Caco-2 (cell line): ENCODE measurements at regions of chr10 and their contacts with region 1.

Region 1: DNA sequence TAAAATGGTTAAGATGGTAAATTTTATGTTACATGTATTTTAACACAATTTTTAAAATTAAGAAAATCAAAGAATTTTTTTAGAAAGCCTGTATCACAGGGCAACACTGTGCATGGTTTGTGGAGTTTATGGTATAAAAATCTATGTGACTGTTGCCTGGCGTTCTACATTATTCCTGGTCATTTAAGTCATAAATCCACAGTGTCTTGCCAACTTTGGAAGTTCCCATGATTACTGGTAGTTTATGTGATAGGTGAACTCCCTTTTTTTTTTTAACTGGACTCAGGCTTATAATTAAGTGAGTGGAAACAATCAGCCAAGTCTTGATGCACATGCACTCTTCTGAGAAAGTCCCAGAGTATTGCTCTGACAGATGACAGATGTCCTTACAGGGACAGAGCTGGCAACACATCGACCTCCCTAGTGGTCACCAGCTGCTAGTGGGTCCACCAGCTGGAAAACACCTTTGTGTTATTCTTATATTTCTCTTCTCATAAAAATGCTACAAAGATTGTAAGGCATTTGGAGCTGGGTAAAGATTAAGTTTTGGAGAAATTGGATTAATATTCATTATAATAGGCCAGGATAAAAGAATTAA is 8.8 kb upstream of the STN1 start:
- DNase-seq: no peak
- H3K4me3 ChIP-seq: no peak overlapping the region
- H3K4me3 Mint-ChIP-seq: peak overlapping the region; percentile 37
- H3K27ac Mint-ChIP-seq: peak overlapping the region; percentile 59
- H3K4me1 ChIP-seq: peaks cover 78% of the 10 kb centered on the region
- H3K4me1 Mint-ChIP-seq: peaks cover 44% of the 10 kb centered on the region
- H3K27me3 ChIP-seq: no peaks in the 10 kb centered on the region
- H3K27me3 Mint-ChIP-seq: no peaks in the 10 kb centered on the region
- CTCF ChIP-seq: peak in 1 of 2 experiments; percentile 25

Region 2: GRCh38 chr10:103712570-103713498 is 214.0 kb before region 1 on chr10:
- CTCF ChIA-PET with region 1: no interaction called
- POLR2A ChIA-PET with region 1: no interaction called
- intact Hi-C with region 1: no loop called
- DNase-seq: peak; percentile 79 to 88
- H3K4me3 ChIP-seq: no peak overlapping the region
- H3K4me3 Mint-ChIP-seq: no peak overlapping the region
- H3K27ac Mint-ChIP-seq: no peak overlapping the region
- H3K4me1 ChIP-seq: peaks cover 21% of the 10 kb centered on the region
- H3K4me1 Mint-ChIP-seq: peaks cover 22% of the 10 kb centered on the region
- H3K27me3 ChIP-seq: no peaks in the 10 kb centered on the region
- H3K27me3 Mint-ChIP-seq: no peaks in the 10 kb centered on the region
- CTCF ChIP-seq: peak; percentile 82 to 93

Region 3: DNA sequence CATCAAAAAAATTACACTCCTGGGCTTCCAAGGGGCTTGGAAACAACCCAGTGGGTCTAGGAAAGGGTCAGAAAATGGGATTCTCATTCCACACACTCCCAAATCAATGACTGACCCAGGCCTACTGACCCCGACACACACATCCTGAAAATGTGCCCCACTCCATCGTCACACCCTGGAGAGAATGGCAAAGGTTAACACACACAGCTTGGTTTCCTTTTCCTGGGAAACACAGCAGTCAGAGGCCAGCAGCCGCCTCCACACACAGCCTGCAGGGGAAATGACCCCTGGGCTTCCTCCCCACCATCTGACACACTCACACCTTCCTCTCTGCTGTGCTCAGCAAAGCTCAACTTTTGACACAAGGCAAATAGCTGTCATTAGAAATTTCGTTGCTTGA is 114.4 kb before region 1 on chr10:
- CTCF ChIA-PET with region 1: no interaction called
- POLR2A ChIA-PET with region 1: no interaction called
- intact Hi-C with region 1: no loop called
- DNase-seq: no peak
- H3K4me3 ChIP-seq: no peak overlapping the region
- H3K4me3 Mint-ChIP-seq: no peak overlapping the region
- H3K27ac Mint-ChIP-seq: no peak overlapping the region
- H3K4me1 ChIP-seq: peaks cover 21% of the 10 kb centered on the region
- H3K4me1 Mint-ChIP-seq: peaks cover 28% of the 10 kb centered on the region
- H3K27me3 ChIP-seq: no peaks in the 10 kb centered on the region
- H3K27me3 Mint-ChIP-seq: no peaks in the 10 kb centered on the region
- CTCF ChIP-seq: no peak

Region 4: GRCh38 chr10:103911021-103911459 is 15.8 kb before region 1 on chr10:
- CTCF ChIA-PET with region 1: no interaction called
- POLR2A ChIA-PET with region 1: no interaction called
- intact Hi-C with region 1: no loop called
- DNase-seq: no peak
- H3K4me3 ChIP-seq: no peak overlapping the region
- H3K4me3 Mint-ChIP-seq: no peak overlapping the region
- H3K27ac Mint-ChIP-seq: no peak overlapping the region
- H3K4me1 ChIP-seq: no peaks in the 10 kb centered on the region; the same call in 1 of the 2 replicates
- H3K4me1 Mint-ChIP-seq: peaks cover 6% of the 10 kb centered on the region
- H3K27me3 ChIP-seq: no peaks in the 10 kb centered on the region
- H3K27me3 Mint-ChIP-seq: no peaks in the 10 kb centered on the region
- CTCF ChIP-seq: no peak

Region 5: DNA sequence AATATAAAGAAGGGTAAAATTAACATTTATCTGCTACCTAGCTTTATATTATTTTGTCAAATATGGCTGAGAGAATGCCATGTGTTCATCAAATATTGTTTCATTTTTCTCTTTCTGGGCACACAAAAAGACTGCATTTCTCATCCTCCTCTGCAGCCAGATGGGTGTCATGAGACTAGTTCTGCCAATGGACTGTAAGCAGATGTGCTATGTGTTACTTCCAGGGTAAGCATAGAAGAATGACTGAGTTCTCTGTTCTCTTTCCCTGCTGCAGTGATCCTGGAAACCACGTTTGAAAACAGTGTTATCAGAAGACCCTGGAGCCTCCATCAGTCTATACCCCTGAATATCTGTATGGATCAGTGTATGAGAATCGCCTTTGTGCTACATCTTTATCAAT is 16.0 kb after region 1 on chr10:
- CTCF ChIA-PET with region 1: no interaction called
- POLR2A ChIA-PET with region 1: no interaction called
- intact Hi-C with region 1: loop called (anchors 2 kb)
- DNase-seq: no peak
- H3K4me3 ChIP-seq: no peak overlapping the region
- H3K4me3 Mint-ChIP-seq: no peak overlapping the region
- H3K27ac Mint-ChIP-seq: no peak overlapping the region
- H3K4me1 ChIP-seq: peaks cover 13% of the 10 kb centered on the region
- H3K4me1 Mint-ChIP-seq: peaks cover 22% of the 10 kb centered on the region
- H3K27me3 ChIP-seq: no peaks in the 10 kb centered on the region
- H3K27me3 Mint-ChIP-seq: no peaks in the 10 kb centered on the region
- CTCF ChIP-seq: no peak

Region 6: GRCh38 chr10:104005172-104005863 is 78.5 kb after region 1 on chr10:
- CTCF ChIA-PET with region 1: no interaction called
- POLR2A ChIA-PET with region 1: no interaction called
- intact Hi-C with region 1: no loop called
- DNase-seq: no peak
- H3K4me3 ChIP-seq: no peak overlapping the region
- H3K4me3 Mint-ChIP-seq: no peak overlapping the region
- H3K27ac Mint-ChIP-seq: no peak overlapping the region
- H3K4me1 ChIP-seq: no peaks in the 10 kb centered on the region
- H3K4me1 Mint-ChIP-seq: no peaks in the 10 kb centered on the region
- H3K27me3 ChIP-seq: no peaks in the 10 kb centered on the region
- H3K27me3 Mint-ChIP-seq: no peaks in the 10 kb centered on the region
- CTCF ChIP-seq: no peak